H1 (cell line): ENCODE measurements at regions of chr3 and their contacts with region 1.

Region 1: DNA sequence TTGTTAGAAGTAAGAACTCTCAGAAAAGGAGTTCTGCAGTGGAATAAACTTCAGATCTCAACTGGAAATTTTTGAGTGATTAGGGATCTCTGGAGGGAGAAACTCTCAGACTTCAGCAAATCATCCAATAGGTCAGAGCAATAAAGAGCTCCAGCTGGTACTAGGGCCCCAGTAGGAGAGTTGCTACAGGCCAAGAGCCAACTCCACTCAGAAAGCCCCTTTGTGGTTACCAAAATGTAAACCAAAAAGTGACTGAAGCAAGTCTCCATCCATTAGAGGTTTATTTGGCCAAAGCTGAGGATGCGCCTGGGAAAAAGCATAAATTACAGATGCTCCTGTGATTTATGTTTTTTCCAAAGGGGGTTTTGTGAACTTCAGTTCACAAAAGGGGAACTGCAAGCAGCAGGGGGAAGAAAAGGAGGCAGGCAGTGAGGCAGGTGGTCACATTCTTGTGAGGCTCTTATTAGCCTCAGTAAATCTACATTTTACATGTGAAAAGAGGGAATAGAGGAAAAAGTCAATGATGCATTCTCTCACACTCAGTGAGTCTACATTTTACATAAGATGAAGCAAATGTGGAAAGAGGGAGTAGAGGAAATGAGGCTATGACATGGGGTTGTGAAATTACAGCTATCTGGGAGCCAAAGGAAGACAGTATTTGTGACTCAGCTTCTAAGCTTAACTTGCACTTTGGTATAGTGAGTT is 92.4 kb upstream of the DAZL start:
- DNase-seq: no peak
- H3K4me3 ChIP-seq: peak overlapping the region in 3 of 4 experiments; percentile 4 to 51 (median 45); a peak in 4 of 8 replicates
- H3K27ac ChIP-seq: peak overlapping the region; percentile 62; the same call in 1 of the 2 replicates
- H3K4me1 ChIP-seq: peaks cover 7 to 17% (median 11%) of the 10 kb centered on the region in 4 experiments; a peak in 5 of 7 replicates
- H3K27me3 ChIP-seq: no peaks in the 10 kb centered on the region
- CTCF ChIP-seq: no peak
- EP300 ChIP-seq: no peak
- POLR2A ChIP-seq: no peak
- RAD21 ChIP-seq: no peak

Region 2: DNA sequence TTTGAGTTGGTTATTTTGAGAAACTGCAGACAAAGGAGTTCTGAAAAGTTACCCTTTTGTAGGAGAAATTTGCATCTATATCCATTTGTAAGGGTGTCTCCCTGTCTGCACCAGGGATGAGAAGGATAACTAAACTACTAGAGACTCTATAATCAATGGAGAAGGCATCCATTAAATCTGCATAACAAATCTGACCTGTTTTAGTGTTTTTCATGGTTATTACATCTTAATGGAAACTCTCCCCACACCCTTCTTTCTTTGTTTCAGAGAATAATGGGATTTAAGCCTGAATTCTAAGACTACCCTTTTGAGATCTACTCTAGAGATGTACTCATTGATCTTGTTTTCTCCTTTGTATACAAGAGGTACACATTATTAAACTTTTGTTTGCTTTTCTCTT is 10.4 kb before region 1 on chr3:
- CTCF ChIA-PET with region 1: interaction called, 6 read pairs
- POLR2A ChIA-PET with region 1: interaction called, 10 read pairs
- DNase-seq: no peak
- H3K4me3 ChIP-seq: peak overlapping the region in 1 of 4 experiments; percentile 11; a peak in 1 of 8 replicates
- H3K27ac ChIP-seq: no peak overlapping the region
- H3K4me1 ChIP-seq: peaks cover 0 to 4% (median 2%) of the 10 kb centered on the region in 4 experiments; a peak in 4 of 7 replicates
- H3K27me3 ChIP-seq: no peaks in the 10 kb centered on the region
- CTCF ChIP-seq: no peak
- EP300 ChIP-seq: peak in 1 of 2 experiments; percentile 84; a peak in 1 of 3 replicates
- POLR2A ChIP-seq: no peak
- RAD21 ChIP-seq: no peak; a peak in 1 of 4 replicates

Region 3: GRCh38 chr3:16801698-16802097 is 104.1 kb after region 1 on chr3:
- CTCF ChIA-PET with region 1: no interaction called
- POLR2A ChIA-PET with region 1: no interaction called
- DNase-seq: no peak
- H3K4me3 ChIP-seq: no peak overlapping the region
- H3K27ac ChIP-seq: no peak overlapping the region
- H3K4me1 ChIP-seq: peaks cover 0 to 4% (median 0%) of the 10 kb centered on the region in 4 experiments; a peak in 2 of 7 replicates
- H3K27me3 ChIP-seq: no peaks in the 10 kb centered on the region
- CTCF ChIP-seq: no peak
- EP300 ChIP-seq: no peak
- POLR2A ChIP-seq: no peak
- RAD21 ChIP-seq: no peak